Dorsolateral prefrontal cortex (tissue), 120 donors: ENCODE measurements at regions of chr3 and their contacts with region 1.

Region 1: GRCh38 chr3:115092220-115092791 is 54.8 kb downstream of the ZBTB20 start:
- DNase-seq: peak; percentile 54 to 86 (median 76)
- H3K4me3 ChIP-seq: peak overlapping the region in 26 of 59 donors; percentile 2 to 48 (median 22)
- H3K27ac ChIP-seq: peak overlapping the region; percentile 27 to 92 (median 85)
- H3K27me3 ChIP-seq: no peaks in the 10 kb centered on the region
- CTCF ChIP-seq: peak; percentile 26 to 94 (median 78)

Region 2: DNA sequence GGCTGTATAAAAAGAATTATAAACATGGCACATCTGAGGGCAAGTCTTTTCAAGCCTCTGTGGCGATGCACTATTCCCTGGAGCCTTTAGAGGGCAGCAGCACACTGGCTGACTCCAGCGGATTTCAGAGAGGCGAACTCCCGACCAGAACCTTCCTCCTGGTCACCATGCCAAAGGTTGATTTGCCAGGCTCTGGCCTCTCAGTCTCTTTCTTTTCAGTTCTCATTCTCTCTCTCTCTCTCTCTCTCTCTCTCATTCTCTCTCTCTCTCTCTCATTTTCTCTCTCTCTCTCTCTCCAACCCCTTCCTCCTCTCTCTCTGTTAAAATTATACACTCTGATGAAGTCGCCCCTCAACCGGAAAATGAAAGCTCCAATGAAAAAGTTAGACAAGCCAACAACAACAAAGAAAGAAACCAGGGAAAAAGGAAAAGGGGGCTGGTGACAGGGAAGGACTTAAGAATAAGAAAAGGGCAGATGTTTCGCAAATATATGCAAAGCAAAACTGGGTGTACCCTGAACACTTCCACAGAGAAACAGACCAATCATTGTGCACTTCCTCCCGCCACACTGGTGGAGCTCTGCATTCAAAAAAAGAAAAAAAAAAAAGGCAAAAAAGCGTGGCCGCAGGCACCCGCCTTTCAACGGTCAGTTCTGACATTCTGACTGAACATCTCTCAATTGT is 708.3 kb before region 1 on chr3:
- intact Hi-C with region 1: loop called in 1 of 2 experiments (anchors 10 kb)
- DNase-seq: peak; percentile 74 to 91 (median 87)
- H3K4me3 ChIP-seq: peak overlapping the region; percentile 9 to 68 (median 51)
- H3K27ac ChIP-seq: peak overlapping the region; percentile 69 to 95 (median 86)
- H3K27me3 ChIP-seq: no peaks in the 10 kb centered on the region
- CTCF ChIP-seq: peak; percentile 81 to 98 (median 92)

Region 3: DNA sequence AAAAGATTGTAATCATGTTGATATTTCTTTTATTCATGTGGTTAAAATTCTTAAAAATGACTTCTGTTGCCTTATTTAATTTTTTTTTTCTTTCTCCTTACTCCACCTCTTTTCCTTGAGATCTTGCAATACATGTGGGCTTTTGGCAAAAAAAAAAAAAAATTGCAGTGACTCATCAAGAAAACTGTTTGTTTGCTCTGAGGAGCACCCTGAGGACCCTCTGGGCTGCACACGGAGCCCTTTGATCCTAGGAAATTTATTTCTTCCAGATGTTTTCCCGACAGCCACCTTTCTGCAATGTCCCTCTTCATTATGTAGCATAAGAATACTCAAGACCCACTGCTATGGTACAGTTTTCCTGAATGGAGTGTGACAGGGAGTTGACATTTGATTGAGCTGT is 316.9 kb before region 1 on chr3:
- intact Hi-C with region 1: no loop called
- DNase-seq: no peak
- H3K4me3 ChIP-seq: no peak overlapping the region
- H3K27ac ChIP-seq: no peak overlapping the region
- H3K27me3 ChIP-seq: no peaks in the 10 kb centered on the region
- CTCF ChIP-seq: no peak

Region 4: DNA sequence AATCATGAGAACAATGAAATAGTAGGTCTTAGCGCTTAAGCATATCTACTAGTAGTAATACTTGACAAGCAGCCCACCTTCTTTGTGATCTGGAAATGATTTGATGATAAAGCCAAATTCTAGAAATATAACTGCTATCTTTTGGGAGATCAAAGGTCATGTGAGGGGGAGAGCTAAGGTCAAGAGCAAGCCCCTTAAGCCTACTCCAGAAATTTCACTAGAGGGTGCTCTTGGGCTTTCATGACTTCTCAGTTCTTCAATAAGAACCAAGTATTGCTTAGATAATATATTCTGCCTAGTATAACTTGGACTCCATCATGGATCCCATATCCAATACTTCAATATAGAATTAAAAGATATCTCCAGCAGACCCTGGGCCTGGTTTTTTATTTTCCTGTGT is 264.8 kb before region 1 on chr3:
- intact Hi-C with region 1: loop called (anchors 2 to 5 kb)
- DNase-seq: no peak
- H3K4me3 ChIP-seq: no peak overlapping the region
- H3K27ac ChIP-seq: peak overlapping the region in 10 of 59 donors; percentile 2 to 47 (median 24)
- H3K27me3 ChIP-seq: no peaks in the 10 kb centered on the region
- CTCF ChIP-seq: peak; percentile 50 to 87 (median 71)

Region 5: GRCh38 chr3:115147329-115148141 is 55.2 kb after region 1 on chr3:
- intact Hi-C with region 1: loop called (anchors 2 to 5 kb)
- DNase-seq: peak; percentile 92 to 100 (median 99)
- H3K4me3 ChIP-seq: peak overlapping the region; percentile 62 to 97 (median 89)
- H3K27ac ChIP-seq: peak overlapping the region; percentile 74 to 99 (median 98)
- H3K27me3 ChIP-seq: no peaks in the 10 kb centered on the region
- CTCF ChIP-seq: peak in 30 of 56 donors; percentile 7 to 40 (median 24)

Region 6: DNA sequence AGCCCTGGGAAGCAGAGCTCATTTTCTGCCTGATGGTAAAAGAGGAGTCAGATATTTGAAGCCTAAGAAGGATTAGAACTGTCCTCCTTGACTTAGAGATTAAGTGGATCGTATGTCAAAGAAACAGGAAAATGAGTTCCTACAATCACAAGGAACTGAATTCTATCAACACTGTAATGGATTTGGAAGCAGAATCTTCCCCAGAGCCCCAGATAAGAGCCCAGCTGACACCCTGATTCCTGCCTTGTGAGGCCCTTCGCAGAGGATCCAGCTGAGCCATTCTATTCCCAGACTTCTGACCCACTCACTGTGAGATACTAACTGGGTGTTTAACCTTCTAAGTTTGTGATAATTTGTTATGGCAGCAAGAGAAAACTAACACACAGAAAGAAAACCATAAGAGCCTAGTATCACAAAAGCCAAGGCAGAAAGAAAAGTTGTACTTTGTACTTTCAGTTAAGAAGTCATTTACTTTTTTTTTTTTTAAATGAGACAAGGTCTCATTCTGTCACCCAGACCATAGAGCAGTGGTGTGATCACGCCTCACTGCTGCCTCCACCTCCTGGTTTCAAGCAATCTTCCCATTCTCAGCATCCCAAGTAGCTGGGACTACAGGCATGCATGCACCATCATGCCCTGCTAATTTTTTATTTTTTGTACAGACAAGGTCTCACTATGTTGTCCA is 115.9 kb after region 1 on chr3:
- intact Hi-C with region 1: no loop called
- DNase-seq: no peak
- H3K4me3 ChIP-seq: no peak overlapping the region
- H3K27ac ChIP-seq: no peak overlapping the region
- H3K27me3 ChIP-seq: no peaks in the 10 kb centered on the region
- CTCF ChIP-seq: no peak